ENCODE measurements at regions of chr5 and their contacts with region 1.

Region 1: DNA sequence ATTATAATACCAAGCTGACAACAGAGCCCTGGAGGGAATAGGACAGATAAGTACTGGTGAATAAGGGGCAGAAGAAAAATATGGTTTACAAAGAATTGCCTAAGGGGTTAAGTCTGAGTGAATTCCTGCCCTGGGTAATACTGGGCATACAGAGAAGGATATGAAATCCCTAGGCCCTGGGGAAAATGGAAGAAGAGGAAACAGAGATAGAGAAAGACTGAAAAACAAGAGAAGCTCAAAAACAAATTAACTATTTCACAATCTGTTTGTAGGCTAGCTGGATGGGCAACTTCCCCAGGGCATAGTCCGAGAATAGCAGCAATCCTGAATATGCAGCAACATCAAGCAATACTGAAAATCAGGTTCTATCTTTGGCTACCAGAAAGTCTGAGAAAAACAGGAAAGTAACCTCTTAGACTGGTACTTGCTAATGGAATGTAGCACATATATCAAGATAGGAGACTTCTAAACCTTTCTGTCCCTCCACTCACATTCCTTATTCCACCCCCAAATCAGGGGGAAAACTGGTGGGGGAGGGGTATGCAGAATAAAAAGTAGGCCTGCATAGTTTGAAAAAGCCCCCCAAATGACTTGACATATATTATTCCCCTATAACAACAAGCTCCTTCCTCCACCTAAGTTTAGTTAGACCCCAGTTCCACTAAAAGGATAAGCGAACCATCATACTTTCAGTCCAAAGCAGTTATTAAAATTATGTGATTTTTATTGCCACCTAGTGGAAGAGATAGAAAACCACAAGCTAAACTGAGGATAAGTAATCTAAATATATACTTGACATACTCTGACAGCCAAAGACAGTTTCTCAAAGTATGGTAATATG is 20.6 kb downstream of the SLC38A9 start:
- DNase-seq: peak; percentile 63
- ATAC-seq: peak; percentile 91
- H3K4me3 ChIP-seq: peak overlapping the region in 2 of 3 experiments; percentile 22 to 25; a peak in 2 of 6 replicates
- H3K27ac ChIP-seq: peak overlapping the region; percentile 46
- H3K4me1 ChIP-seq: peaks cover 32% of the 10 kb centered on the region
- H3K27me3 ChIP-seq: no peaks in the 10 kb centered on the region; a peak in 1 of 5 replicates
- CTCF ChIP-seq: peak; percentile 65
- EP300 ChIP-seq: peak in 1 of 2 experiments; percentile 36; a peak in 1 of 4 replicates
- POLR2A ChIP-seq: no peak
- RAD21 ChIP-seq: 0 out of 2 replicates have a peak, but pooled peaks have one; percentile 38

Region 2: DNA sequence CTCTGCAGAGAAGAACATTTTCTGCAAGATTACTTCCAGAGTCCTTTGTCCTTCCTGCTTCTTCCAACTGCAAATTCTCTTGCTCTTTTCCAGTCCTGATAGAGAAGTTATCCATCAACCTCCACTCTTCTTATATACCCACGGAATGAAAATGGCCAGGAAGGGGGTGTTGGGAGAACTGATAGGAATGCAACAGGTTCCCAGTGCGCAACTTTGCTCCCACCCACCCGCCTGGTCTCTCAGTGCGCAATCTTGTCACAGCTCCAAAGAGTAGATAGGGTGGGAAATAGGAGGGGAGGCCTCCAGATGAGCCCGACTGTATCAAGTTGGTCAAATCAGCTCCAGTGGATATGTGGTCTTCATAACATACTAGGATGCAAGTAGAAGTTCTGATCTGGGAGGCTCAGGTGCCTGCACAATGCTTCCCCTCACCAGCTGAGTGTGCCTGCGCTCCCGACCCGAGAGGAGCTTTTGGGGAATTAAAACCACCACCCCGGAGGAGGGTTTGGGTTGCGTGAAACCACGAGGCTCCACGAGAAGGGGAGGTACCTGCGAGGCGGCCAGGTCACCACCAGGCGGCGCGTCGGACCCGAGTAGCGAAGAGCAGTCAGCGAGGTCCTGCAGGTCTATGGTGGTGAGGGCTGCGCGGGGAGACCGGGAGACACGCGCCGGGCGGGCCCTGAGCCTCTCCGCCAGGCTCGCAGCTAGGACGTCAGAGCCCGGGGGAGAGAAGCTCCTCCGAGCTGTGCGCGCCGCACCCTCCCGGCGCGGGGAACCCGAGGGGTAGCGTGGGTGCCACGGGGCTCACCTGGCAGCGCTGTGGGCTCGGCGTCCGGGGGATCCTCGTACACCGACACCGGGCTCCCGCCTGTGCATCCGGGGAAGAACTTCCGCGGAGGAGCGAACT is 465.2 kb before region 1 on chr5:
- CTCF ChIA-PET with region 1: interaction called, 5 read pairs
- POLR2A ChIA-PET with region 1: no interaction called
- in situ Hi-C with region 1: no loop called
- intact Hi-C with region 1: loop called (anchors 5 kb)
- DNase-seq: peak; percentile 38
- ATAC-seq: peak; percentile 86
- H3K4me3 ChIP-seq: peak overlapping the region; percentile 39 to 74 (median 41); a peak in 4 of 6 replicates
- H3K27ac ChIP-seq: no peak overlapping the region
- H3K4me1 ChIP-seq: peaks cover 4% of the 10 kb centered on the region; the same call in 1 of the 2 replicates
- H3K27me3 ChIP-seq: peaks cover 1 to 60% of the 10 kb centered on the region in 2 experiments
- CTCF ChIP-seq: peak; percentile 92
- EP300 ChIP-seq: no peak
- POLR2A ChIP-seq: no peak
- RAD21 ChIP-seq: peak; percentile 69

Region 3: DNA sequence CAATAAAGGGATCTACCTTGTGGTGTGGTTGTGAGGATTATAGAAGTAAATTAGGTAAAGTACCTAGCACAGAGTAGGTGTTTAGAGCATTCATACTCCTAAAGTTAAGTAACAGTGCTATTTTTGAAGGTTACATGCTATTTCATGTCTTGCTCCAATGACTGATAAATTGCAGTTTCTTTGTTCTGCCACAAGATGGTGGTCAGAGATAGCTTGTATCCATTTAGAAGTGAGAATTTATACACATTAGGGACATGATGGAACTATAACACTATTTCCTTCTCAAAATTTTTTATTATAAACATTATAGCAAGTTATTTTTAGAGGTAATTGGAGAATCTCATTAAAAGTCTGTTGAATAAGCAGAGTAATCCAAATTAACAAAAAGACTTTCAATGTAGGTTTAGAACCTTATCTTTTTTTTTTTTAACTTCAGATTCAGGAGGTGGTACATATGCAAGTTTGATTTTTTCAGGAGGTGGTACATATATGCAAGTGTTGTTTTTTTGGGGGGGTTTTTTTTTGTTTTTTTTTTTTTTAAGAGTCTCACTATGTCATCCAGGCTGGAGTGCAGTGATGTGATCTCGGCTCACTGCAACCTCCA is 366.6 kb before region 1 on chr5:
- CTCF ChIA-PET with region 1: interaction called, 5 read pairs
- POLR2A ChIA-PET with region 1: no interaction called
- in situ Hi-C with region 1: loop called (anchors 10 kb)
- intact Hi-C with region 1: loop called (anchors 1 kb)
- DNase-seq: peak; percentile 49
- ATAC-seq: peak; percentile 60
- H3K4me3 ChIP-seq: no peak overlapping the region
- H3K27ac ChIP-seq: peak overlapping the region; percentile 59
- H3K4me1 ChIP-seq: peaks cover 25% of the 10 kb centered on the region
- H3K27me3 ChIP-seq: no peaks in the 10 kb centered on the region
- CTCF ChIP-seq: peak; percentile 67
- EP300 ChIP-seq: no peak
- POLR2A ChIP-seq: no peak
- RAD21 ChIP-seq: 0 out of 2 replicates have a peak, but pooled peaks have one; percentile 13

Region 4: GRCh38 chr5:55344392-55344992 is 347.0 kb before region 1 on chr5:
- CTCF ChIA-PET with region 1: interaction called, 10 read pairs
- POLR2A ChIA-PET with region 1: no interaction called
- in situ Hi-C with region 1: no loop called
- intact Hi-C with region 1: loop called (anchors 1 kb)
- DNase-seq: peak; percentile 52
- ATAC-seq: 0 out of 3 replicates have a peak, but pooled peaks have one; percentile 32
- H3K4me3 ChIP-seq: no peak overlapping the region
- H3K27ac ChIP-seq: no peak overlapping the region
- H3K4me1 ChIP-seq: peaks cover 15% of the 10 kb centered on the region
- H3K27me3 ChIP-seq: no peaks in the 10 kb centered on the region
- CTCF ChIP-seq: peak; percentile 58
- EP300 ChIP-seq: no peak
- POLR2A ChIP-seq: no peak
- RAD21 ChIP-seq: no peak

Region 5: DNA sequence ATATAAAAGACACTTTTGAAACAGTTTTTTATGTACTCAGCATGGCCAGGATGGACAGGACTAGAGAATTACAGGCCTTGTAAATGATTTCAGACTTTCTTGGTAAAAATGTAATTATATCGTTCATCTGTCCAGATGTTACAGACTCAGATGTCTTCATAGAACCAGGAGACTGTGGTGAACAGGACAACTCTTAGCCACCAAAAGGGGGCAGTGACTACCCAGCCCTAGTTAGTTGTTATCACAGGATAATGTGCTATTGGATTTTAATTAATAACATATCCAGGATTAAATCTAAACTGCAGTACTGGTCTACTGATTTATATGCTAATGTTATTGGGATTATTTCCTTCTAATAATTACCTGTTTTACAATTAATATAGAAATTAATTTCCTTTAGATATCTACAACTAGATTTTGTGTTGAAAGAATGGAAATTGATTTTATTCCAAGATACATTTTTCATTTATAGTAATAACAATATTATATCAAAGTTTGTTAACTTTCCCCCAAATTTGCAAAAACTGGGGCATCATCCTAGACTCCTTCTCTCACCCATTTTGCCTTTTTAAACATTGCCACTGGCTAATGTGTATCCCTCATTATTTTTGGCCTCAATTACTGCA is 284.3 kb before region 1 on chr5:
- CTCF ChIA-PET with region 1: interaction called, 4 read pairs
- POLR2A ChIA-PET with region 1: no interaction called
- in situ Hi-C with region 1: loop called (anchors 5 kb)
- intact Hi-C with region 1: loop called (anchors 1 kb)
- DNase-seq: peak; percentile 27
- ATAC-seq: peak; percentile 80
- H3K4me3 ChIP-seq: no peak overlapping the region
- H3K27ac ChIP-seq: no peak overlapping the region
- H3K4me1 ChIP-seq: no peaks in the 10 kb centered on the region
- H3K27me3 ChIP-seq: no peaks in the 10 kb centered on the region
- CTCF ChIP-seq: peak; percentile 60
- EP300 ChIP-seq: no peak
- POLR2A ChIP-seq: no peak
- RAD21 ChIP-seq: peak; percentile 24; the same call in 1 of the 2 replicates

Region 6: DNA sequence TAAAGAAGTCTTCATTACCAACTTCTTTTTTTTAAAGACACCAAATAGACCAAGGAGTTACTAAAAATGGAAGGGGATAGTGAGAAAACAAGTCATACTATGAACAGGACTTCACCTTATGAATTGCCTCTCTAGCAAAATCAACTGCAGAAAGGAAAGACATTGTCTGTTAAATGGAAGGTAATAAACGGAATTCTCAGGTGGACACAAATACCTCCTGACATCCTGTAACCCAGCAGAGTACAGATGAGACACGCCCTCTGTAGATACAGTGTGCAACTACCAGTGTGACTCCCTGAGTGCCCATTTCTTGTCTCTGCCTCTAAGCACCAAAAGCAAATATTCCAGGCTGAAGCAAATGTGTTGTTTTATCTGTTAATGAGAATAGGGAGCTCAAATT is 144.5 kb before region 1 on chr5:
- CTCF ChIA-PET with region 1: no interaction called
- POLR2A ChIA-PET with region 1: no interaction called
- in situ Hi-C with region 1: no loop called
- intact Hi-C with region 1: loop called (anchors 5 kb)
- DNase-seq: peak; percentile 28
- ATAC-seq: peak; percentile 90
- H3K4me3 ChIP-seq: no peak overlapping the region
- H3K27ac ChIP-seq: no peak overlapping the region
- H3K4me1 ChIP-seq: peaks cover 38% of the 10 kb centered on the region
- H3K27me3 ChIP-seq: no peaks in the 10 kb centered on the region
- CTCF ChIP-seq: peak; percentile 53
- EP300 ChIP-seq: no peak
- POLR2A ChIP-seq: no peak
- RAD21 ChIP-seq: no peak